ENCODE measurements at regions of chr15 and their contacts with region 1.

Region 1: GRCh38 chr15:98085003-98085639 is 124.6 kb downstream of the ARRDC4 start:
- DNase-seq: peak; percentile 2
- H3K4me3 Mint-ChIP-seq: no peak overlapping the region
- H3K27ac Mint-ChIP-seq: no peak overlapping the region
- H3K4me1 Mint-ChIP-seq: no peaks in the 10 kb centered on the region
- H3K27me3 Mint-ChIP-seq: no peaks in the 10 kb centered on the region

Region 2: DNA sequence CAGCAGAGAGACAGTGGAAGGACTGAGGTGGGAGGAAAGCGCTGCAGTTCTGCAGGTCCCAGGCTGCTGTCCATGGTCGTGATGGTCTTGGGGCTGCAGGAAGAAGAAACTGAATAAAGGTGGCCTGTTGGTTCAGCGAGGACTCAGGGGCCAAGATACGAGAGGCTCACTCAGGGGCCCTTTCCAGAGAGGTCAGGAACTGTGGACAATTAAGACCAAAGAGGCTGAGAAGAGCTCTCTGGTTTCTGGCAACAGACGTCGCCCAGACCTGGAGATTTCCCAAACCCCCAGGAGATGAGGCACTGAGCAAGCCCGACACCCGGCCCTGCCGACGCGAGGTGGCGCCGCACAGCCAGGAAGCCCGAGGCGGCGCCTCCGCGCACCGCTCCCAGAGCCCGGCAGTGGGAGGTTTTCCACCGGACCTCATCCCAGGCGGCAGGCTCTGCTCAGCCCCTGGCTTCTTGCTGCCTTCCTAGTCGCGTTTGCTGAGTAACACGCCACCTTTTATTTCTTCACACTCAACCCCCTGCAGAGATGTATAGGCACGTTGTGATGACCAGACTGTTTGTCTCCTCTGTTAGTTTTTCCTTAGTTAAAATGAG is 181.0 kb before region 1 on chr15:
- intact Hi-C with region 1: loop called (anchors 1 kb)
- DNase-seq: no peak
- H3K4me3 Mint-ChIP-seq: no peak overlapping the region
- H3K27ac Mint-ChIP-seq: no peak overlapping the region
- H3K4me1 Mint-ChIP-seq: no peaks in the 10 kb centered on the region
- H3K27me3 Mint-ChIP-seq: peaks cover 18% of the 10 kb centered on the region

Region 3: DNA sequence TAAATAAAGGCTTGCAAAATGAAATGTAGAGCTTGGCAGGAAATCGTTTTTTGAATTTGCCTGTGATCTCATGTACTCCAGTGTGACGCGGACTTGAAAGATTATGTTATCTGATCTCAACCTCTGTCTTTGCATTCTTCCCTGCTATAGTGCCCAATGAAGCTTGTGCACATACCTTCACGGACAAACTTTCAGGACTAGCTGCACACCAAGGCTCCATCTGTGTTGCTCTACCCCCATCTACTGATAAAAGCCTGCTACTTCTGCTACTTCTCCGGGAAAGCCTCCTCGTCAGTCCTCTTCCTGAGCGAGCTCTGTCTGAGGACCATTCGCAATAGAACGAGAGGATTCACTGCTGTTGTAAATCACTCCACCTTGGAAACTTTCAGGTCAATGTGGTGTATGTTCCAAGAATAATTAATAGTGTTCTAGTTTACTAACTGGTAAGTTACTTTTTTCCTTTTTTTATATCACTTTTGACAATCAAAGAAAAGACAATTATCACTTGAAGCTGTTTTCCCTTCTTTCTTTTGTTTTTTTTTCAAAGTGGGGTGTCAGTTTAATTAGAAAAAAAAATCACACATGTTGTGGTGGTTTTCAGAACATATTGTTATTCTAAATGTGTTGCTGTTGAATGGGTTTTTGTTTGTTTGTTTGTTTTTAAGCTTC is 92.9 kb after region 1 on chr15:
- intact Hi-C with region 1: loop called (anchors 1 kb)
- DNase-seq: peak; percentile 34
- H3K4me3 Mint-ChIP-seq: no peak overlapping the region
- H3K27ac Mint-ChIP-seq: no peak overlapping the region
- H3K4me1 Mint-ChIP-seq: peaks cover 4% of the 10 kb centered on the region
- H3K27me3 Mint-ChIP-seq: peaks cover 14% of the 10 kb centered on the region

Region 4: DNA sequence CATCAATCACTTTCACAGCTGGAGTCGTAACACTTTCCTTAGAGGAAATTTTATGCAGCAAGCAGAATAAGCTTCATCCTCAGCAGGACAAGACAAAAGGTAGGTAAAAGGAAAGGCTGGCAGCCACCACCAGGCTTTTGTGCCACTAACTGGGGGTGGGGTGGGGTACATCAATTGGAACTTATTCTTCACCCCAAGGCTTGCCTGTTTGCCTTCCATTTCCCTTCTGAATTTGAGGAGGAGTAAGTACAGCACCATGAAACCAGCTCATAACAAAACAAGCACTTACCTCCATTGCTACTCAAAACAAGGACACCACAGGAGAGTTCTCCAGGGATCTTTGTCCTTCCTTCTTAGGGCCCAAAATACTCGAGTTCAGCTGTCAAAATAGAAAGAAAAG is 172.2 kb after region 1 on chr15:
- intact Hi-C with region 1: no loop called
- DNase-seq: no peak
- H3K4me3 Mint-ChIP-seq: no peak overlapping the region
- H3K27ac Mint-ChIP-seq: no peak overlapping the region
- H3K4me1 Mint-ChIP-seq: no peaks in the 10 kb centered on the region
- H3K27me3 Mint-ChIP-seq: peaks cover 3% of the 10 kb centered on the region